Transverse colon (tissue), 4 donors: ENCODE measurements at regions of chr9 and their contacts with region 1.

Region 1: DNA sequence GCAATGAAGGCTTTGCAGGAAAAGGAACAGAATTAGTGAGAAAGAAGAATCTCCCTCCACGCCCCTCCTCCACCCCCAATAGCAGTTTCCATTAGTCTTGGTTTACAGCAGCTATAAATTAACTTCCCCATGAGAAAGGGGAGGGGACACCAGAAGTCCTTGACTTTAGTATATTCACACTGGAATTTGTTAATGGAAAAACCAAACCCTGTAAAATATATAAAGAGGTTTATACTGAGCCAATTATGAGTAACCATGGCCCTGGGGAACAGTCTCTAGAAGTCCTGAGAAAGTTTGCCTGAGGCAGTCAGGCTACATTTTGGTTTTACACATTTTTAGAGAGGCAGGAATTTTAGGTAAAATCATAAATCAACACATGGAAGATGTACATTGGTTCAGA is 88.5 kb downstream of the ALDH1A1 start:
- DNase-seq: no peak
- H3K4me3 ChIP-seq: no peak overlapping the region
- H3K27ac ChIP-seq: no peak overlapping the region
- H3K4me1 ChIP-seq: no peaks in the 10 kb centered on the region
- H3K27me3 ChIP-seq: no peaks in the 10 kb centered on the region
- CTCF ChIP-seq: no peak
- EP300 ChIP-seq: no peak
- POLR2A ChIP-seq: no peak

Region 2: GRCh38 chr9:72912476-72913381 is 48.4 kb after region 1 on chr9:
- in situ Hi-C with region 1: no loop called
- intact Hi-C with region 1: no loop called
- DNase-seq: no peak
- H3K4me3 ChIP-seq: no peak overlapping the region
- H3K27ac ChIP-seq: peak overlapping the region in 2 of 4 donors; percentile 5 to 26
- H3K4me1 ChIP-seq: no peaks in the 10 kb centered on the region
- H3K27me3 ChIP-seq: no peaks in the 10 kb centered on the region
- CTCF ChIP-seq: no peak
- EP300 ChIP-seq: no peak
- POLR2A ChIP-seq: no peak

Region 3: DNA sequence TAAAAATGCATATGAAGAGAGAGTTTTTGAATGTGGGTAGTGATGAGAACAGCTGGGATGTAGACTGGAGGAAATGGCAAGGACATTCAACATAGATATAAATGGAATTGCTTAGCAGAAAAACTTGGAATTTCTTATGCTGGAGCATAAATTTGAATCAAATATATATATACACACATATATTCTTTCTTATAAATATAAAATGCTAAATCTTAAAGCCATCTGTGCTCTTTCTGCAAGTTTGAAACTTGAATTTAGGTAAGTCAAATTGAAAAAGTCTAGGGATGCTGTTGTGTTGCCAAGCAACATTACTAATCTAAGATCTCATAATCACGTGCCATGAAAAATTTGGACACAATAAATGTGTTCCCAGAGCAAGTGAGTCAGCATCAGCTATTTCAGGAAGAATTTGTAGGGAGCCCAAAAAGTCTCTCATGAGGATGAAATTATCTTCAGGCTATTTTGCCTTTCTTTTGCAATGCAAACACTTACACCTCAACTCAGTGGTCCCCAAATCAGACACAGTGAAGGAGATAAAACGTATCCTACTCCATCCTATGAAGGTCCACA is 146.9 kb after region 1 on chr9:
- in situ Hi-C with region 1: loop called (anchors 10 to 25 kb)
- intact Hi-C with region 1: no loop called
- DNase-seq: no peak
- H3K4me3 ChIP-seq: no peak overlapping the region
- H3K27ac ChIP-seq: no peak overlapping the region
- H3K4me1 ChIP-seq: no peaks in the 10 kb centered on the region
- H3K27me3 ChIP-seq: no peaks in the 10 kb centered on the region
- CTCF ChIP-seq: no peak
- EP300 ChIP-seq: no peak
- POLR2A ChIP-seq: no peak

Region 4: DNA sequence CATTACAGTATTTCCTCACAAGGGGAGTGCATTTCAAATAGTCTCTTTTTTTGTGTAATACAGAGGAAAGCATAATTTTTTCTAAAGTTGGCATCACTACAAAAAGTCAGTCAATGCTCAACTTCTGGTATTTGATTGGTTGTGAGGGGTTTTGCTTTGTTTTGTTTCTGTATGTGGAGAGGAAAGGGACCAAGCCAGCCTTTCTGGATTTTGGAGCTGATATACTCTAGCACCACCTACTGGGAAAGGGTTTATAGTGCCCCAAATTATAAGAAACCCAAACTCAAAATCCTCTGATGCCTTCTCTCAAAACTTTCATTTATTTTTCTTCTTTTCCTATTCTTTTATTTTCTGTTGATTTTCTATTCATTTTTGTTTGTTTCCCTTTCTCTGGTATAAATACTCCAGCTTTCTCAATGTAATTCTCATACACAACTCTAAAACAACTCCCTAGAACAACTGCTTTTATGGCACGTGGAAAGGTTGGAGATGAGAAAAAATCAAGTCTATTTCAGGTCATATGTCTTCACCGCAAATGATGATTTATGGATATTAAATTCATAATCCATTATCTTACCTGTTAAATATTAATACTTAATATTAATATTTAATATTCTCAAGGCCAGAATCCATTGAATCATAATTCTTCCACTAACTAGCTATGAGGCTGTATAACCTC is 217.8 kb after region 1 on chr9:
- in situ Hi-C with region 1: loop called (anchors 10 to 25 kb)
- intact Hi-C with region 1: loop called (anchors 5 kb)
- DNase-seq: no peak
- H3K4me3 ChIP-seq: no peak overlapping the region
- H3K27ac ChIP-seq: peak overlapping the region in 2 of 4 donors; percentile 10 to 59
- H3K4me1 ChIP-seq: peaks cover 13 to 48% (median 27%) of the 10 kb centered on the region in 4 donors
- H3K27me3 ChIP-seq: no peaks in the 10 kb centered on the region
- CTCF ChIP-seq: peak; percentile 70 to 77 (median 75)
- EP300 ChIP-seq: no peak
- POLR2A ChIP-seq: no peak